Transverse colon (tissue), 4 donors: ENCODE measurements at regions of chr3 and their contacts with region 1.

Region 1: DNA sequence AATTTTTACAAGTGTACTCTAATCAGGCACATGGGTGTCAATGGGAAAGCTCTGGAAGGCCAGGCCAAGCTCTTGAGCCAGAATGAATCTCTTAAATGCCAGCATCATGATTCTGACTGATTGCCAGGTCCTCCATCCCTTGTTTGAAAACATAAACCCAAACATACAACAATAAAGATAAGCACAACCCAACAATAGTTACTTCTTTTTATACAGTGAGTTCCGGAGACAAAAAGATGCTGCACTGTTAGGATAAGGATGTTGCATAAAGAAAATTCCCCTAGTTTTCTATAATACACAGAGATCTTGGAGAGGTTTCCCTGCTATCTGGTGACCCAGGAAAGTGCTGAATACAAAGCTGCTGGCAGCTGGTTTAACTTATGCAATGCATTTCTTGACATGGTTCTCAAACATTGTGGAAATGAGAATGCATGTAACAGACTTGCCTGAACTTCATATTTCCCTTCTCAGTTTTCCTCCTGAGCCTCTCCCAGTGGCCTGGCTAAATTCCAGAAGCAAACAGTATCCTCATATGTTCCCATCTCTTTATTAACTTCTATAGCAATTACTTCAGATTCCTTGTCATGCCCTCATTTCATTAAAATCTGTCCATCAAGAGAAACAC is 180.1 kb upstream of the PRICKLE2 start:
- DNase-seq: no peak
- H3K4me3 ChIP-seq: no peak overlapping the region
- H3K27ac ChIP-seq: no peak overlapping the region
- H3K4me1 ChIP-seq: no peaks in the 10 kb centered on the region
- H3K27me3 ChIP-seq: no peaks in the 10 kb centered on the region
- CTCF ChIP-seq: no peak
- EP300 ChIP-seq: no peak
- POLR2A ChIP-seq: no peak

Region 2: GRCh38 chr3:64475037-64475436 is 69.7 kb after region 1 on chr3:
- in situ Hi-C with region 1: no loop called
- intact Hi-C with region 1: loop called (anchors 10 kb)
- DNase-seq: no peak
- H3K4me3 ChIP-seq: no peak overlapping the region
- H3K27ac ChIP-seq: no peak overlapping the region
- H3K4me1 ChIP-seq: no peaks in the 10 kb centered on the region
- H3K27me3 ChIP-seq: no peaks in the 10 kb centered on the region
- CTCF ChIP-seq: no peak
- EP300 ChIP-seq: no peak
- POLR2A ChIP-seq: no peak

Region 3: GRCh38 chr3:64696896-64697295 is 291.6 kb after region 1 on chr3:
- in situ Hi-C with region 1: no loop called
- intact Hi-C with region 1: no loop called
- DNase-seq: no peak
- H3K4me3 ChIP-seq: no peak overlapping the region
- H3K27ac ChIP-seq: no peak overlapping the region
- H3K4me1 ChIP-seq: no peaks in the 10 kb centered on the region
- H3K27me3 ChIP-seq: no peaks in the 10 kb centered on the region
- CTCF ChIP-seq: no peak
- EP300 ChIP-seq: no peak
- POLR2A ChIP-seq: no peak